AG04449 (cell line): ENCODE measurements at regions of chr12 and their contacts with region 1.

Region 1: GRCh38 chr12:120903411-120904196 is 554 bp downstream of the SPPL3 start:
- DNase-seq: no peak
- H3K4me3 ChIP-seq: peak overlapping the region; percentile 75
- CTCF ChIP-seq: no peak

Region 2: DNA sequence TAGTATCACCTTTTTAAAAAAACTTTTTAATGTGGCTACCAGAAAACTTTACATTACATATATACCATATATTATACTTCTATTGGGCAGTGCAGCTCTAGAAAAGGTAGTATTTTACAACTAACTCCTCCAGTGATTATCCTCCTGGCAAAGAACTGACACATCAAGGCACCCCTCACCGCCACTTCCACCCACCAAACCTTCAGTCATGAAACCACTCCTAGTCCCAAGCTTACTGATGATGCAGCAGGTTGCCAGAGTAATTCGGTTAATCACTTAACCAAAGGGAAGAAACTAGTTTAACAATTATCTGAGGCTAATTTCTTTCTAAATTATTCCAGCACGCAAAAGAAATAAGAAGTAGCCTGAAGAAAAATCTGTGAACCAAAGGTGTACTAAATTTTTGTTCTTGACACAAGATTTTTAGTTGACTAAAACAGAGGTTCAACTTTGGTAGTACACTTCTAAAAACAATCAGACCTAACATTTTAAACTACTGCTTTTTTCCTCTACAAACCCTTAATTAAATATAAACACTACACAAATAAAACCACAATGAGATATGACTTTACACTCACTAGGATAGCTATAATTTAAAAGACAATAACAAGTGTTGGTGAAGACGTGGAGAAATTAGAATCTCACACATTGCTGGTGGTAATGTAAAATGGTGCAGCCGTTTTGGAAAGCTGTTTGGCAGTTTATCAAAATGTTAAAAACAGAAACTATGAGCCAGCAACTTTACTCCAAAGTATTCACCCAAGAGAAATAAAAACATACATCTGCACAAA is 16.2 kb before region 1 on chr12:
- CTCF ChIA-PET with region 1: interaction called, 10 read pairs
- POLR2A ChIA-PET with region 1: no interaction called
- DNase-seq: no peak
- H3K4me3 ChIP-seq: no peak overlapping the region
- CTCF ChIP-seq: no peak

Region 3: GRCh38 chr12:120914794-120915193 is 11.2 kb after region 1 on chr12:
- CTCF ChIA-PET with region 1: no interaction called
- POLR2A ChIA-PET with region 1: no interaction called
- DNase-seq: no peak
- H3K4me3 ChIP-seq: no peak overlapping the region
- CTCF ChIP-seq: no peak

Region 4: DNA sequence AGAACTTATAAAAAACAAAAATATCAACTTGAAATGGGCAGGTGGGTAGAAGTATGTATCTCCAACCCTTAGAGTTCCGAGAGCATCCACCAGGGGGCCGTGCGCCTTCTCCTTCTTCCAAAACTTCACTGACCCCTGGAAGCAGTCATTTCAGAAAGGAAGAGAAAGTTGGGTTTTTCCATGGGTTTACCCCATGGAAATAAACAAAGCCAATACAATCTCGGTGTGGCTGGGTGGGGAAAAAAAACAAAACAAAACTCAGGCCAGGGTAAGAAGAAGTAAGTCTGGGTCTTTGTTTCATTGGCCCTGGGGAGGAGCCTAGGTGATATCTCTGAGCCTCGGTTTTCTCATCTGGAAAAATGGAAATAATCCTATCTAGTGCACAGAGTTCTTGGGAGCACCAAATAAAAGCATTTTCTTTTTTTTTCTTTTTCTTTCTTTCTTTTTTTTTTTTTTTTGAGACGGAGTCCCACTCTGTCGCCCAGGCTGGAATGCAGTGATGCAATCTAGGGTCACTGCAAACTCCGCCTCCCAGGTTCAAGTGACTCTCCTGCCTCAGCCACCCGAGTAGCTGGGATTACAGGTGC is 41.1 kb after region 1 on chr12:
- CTCF ChIA-PET with region 1: no interaction called
- POLR2A ChIA-PET with region 1: no interaction called
- DNase-seq: no peak
- H3K4me3 ChIP-seq: no peak overlapping the region
- CTCF ChIP-seq: peak; percentile 71

Region 5: GRCh38 chr12:121060149-121061001 is 156.8 kb after region 1 on chr12:
- CTCF ChIA-PET with region 1: no interaction called
- POLR2A ChIA-PET with region 1: no interaction called
- DNase-seq: no peak
- H3K4me3 ChIP-seq: peak overlapping the region; percentile 42
- CTCF ChIP-seq: peak; percentile 65